Esophagus muscularis mucosa (tissue), 4 donors: ENCODE measurements at regions of chr22 and their contacts with region 1.

Region 1: DNA sequence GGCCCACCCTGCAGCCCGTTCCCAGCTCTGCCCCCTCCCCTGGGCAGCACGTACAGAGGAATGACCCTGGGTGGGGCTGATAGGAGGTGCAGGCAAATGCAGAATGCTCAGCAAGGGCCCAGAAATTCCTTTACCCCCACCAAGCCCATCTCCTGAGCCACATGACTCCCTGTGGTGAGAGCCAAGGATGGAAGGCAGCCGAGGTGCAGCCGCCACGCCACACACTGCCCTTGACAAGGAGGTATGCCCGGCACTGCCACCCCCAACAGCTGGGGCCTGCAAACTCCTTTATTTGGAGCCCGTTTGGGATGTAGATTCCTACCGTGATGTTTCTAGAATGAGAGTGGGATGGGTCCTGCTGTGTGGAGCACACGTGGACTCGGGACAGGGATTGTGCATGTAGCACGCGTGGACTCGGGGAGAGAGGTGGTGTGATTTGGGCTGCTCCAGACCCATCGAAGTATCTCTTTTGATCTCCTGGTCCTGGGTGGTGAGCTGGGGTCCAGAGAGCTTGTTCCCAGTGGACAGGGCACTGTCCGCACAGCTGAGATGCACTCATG is 12.9 kb downstream of the GTSE1 start:
- DNase-seq: no peak
- H3K4me3 ChIP-seq: no peak overlapping the region
- H3K27ac ChIP-seq: no peak overlapping the region
- H3K4me1 ChIP-seq: no peaks in the 10 kb centered on the region
- H3K27me3 ChIP-seq: no peaks in the 10 kb centered on the region
- CTCF ChIP-seq: no peak
- EP300 ChIP-seq: no peak
- POLR2A ChIP-seq: no peak

Region 2: DNA sequence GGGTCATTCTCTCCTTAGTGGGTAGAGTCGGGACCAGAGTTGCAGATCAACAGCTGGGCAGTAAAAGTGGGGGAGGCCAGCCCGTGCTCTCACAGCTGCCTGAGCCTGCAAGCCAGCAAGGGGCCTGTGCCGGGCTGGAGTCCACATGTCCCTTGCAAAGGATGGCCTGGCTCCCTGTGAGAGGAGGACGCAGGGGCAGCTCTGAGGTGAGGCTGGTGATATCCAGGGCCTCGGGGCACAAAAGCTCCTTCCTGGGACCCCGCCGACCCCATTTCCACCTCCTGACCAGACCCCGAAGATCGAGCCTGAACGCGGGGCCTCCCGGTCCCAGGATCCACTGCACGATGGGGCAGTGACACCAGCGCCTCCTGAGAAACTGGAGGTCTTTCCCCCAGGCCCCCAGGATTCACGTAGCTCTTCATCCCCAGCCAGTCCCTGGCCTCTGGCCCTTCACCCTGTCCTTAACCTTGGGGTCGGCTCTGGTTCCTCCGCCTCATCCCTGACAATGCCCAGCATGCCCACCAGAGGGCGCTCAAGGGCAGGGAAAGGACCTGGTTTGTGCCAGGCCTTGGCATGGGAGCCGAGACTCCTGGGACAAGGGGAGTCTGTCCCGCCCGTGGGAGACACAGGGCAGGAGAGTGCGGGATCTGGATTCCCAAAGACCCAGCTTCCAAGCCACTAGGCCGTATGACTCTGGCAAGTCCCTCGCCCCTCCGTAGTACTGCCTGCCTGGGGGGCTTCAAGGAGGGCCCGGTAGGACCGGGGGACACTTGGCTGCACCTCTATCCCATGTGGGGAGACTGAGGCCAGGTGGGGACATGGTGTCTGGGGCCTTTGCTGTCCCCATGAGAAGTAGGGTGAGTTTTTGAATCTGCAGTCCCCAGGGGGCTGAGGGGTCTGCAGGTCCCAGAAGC is 314.9 kb before region 1 on chr22:
- intact Hi-C with region 1: loop called (anchors 5 kb)
- DNase-seq: no peak
- H3K4me3 ChIP-seq: no peak overlapping the region
- H3K27ac ChIP-seq: peak overlapping the region in 2 of 4 donors; percentile 73 to 82
- H3K4me1 ChIP-seq: peaks cover 49 to 56% (median 55%) of the 10 kb centered on the region in 4 donors
- H3K27me3 ChIP-seq: no peaks in the 10 kb centered on the region
- CTCF ChIP-seq: peak in 2 of 3 experiments; percentile 98
- EP300 ChIP-seq: no peak
- POLR2A ChIP-seq: no peak

Region 3: GRCh38 chr22:46122511-46122971 is 187.1 kb before region 1 on chr22:
- intact Hi-C with region 1: loop called (anchors 1 kb)
- DNase-seq: no peak
- H3K4me3 ChIP-seq: peak overlapping the region in 3 of 4 donors; percentile 10 to 40 (median 17)
- H3K27ac ChIP-seq: no peak overlapping the region
- H3K4me1 ChIP-seq: peaks cover 6 to 27% (median 25%) of the 10 kb centered on the region in 4 donors
- H3K27me3 ChIP-seq: no peaks in the 10 kb centered on the region
- CTCF ChIP-seq: peak; percentile 92 to 93 (median 93)
- EP300 ChIP-seq: no peak
- POLR2A ChIP-seq: no peak

Region 4: DNA sequence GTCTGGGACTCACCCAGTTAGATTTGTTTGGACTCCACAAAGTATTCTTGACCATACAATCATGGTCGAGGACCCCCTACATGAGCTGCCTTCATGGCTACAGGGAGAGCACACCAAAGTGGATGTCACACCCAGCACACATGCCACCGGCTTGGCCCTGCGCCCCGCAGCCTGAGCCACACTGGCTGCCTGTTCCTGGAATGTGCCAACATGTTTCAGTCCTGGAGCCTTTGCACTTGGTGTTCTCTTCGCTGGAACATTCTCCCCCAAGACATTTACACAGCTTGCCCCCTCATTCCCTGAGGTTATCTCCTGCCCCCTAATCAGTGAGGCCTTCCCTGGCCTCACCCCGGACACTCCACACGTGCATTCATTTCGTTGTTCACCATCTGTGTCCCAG is 113.3 kb before region 1 on chr22:
- intact Hi-C with region 1: no loop called
- DNase-seq: no peak
- H3K4me3 ChIP-seq: no peak overlapping the region
- H3K27ac ChIP-seq: no peak overlapping the region
- H3K4me1 ChIP-seq: peaks cover 0 to 7% (median under 1%) of the 10 kb centered on the region in 4 donors
- H3K27me3 ChIP-seq: no peaks in the 10 kb centered on the region
- CTCF ChIP-seq: no peak
- EP300 ChIP-seq: no peak
- POLR2A ChIP-seq: no peak